ENCODE measurements at regions of chr22 and their contacts with region 1.

Region 1: DNA sequence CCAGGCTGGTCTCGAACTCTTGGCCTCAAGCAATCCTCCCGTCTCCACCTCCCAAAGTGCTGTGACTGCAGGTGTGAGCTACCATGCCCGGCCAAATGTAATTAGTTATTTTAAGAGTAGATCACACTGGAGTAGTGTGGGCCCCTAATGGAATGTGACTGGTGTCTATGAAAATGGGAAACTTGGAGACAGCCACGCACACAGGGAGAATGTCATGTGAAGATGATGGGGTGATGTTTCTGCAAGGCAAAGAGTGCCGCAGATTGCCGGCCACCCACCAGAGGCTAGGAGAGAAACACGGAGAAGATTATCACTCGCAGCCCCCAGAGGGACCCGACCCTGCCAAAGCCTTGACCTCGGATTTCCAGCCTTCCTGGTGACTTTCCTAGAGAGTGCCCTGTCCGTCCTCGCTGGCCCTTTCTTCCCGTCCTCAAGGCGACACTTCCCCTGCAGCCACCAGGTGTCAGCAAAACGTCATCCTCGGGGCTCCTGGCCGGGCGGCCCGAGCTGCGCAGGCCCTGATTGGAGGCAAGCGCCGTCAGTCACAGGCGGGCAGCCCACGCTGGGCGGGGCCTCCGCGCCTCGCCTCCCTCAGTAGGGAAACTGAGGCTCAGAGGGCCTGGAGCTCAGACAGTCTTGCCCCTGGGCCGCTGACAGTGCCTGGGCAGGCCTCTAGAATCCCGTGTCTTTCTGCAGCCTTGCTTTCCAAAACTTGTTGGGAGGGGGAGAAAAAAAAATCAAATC is 16.3 kb downstream of the CRYBB2 start:
- DNase-seq: peak; percentile 80
- ATAC-seq: peak; percentile 100
- H3K4me3 ChIP-seq: peak overlapping the region; percentile 53
- H3K27ac ChIP-seq: no peak overlapping the region
- H3K4me1 ChIP-seq: no peaks in the 10 kb centered on the region
- H3K27me3 ChIP-seq: no peaks in the 10 kb centered on the region
- CTCF ChIP-seq: peak; percentile 79

Region 2: DNA sequence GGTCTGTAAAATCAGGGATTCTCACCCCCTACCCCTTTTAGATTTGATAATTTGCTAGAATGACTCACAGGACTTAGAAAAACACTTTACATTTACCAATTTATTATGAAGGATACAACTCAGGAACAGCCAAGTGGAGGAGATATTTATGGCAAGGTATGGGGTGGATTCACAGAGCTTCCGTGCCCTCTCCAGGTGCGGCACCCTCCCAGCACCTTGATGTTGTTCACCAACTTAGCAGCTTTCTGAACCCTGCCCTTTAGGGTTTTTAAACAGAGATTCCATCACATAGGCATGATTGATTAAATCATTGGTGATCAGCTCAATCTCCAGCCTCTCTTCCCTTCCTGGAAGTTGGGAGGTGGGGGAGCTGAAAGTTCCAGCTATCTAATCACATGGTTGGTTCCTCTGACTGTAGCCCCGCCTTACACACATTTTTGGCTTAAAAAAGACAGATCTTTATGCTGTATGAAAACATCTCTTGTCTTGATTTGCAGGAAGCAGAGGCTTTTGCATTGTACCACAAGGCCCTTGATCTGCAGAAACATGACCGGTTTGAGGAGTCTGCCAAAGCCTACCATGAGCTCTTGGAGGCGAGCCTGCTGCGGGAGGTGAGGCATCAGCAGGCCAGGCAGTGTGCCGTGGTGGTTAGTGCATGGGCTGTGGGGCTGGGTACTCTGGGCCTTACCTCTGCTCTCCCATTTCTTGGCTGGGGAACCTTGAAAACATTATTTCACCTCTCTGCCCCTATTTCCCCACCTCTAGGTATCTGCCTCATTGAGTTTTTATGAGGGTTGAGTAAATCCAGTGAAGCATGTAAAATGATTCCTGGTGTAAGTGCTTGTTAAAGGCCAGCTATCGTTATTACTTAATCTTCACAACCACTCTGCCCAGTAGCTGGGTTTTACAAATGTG is 1197.6 kb before region 1 on chr22:
- CTCF ChIA-PET with region 1: no interaction called
- POLR2A ChIA-PET with region 1: no interaction called
- intact Hi-C with region 1: no loop called
- DNase-seq: no peak
- ATAC-seq: no peak
- H3K4me3 ChIP-seq: no peak overlapping the region
- H3K27ac ChIP-seq: no peak overlapping the region
- H3K4me1 ChIP-seq: peaks cover 10% of the 10 kb centered on the region
- H3K27me3 ChIP-seq: no peaks in the 10 kb centered on the region
- CTCF ChIP-seq: no peak

Region 3: DNA sequence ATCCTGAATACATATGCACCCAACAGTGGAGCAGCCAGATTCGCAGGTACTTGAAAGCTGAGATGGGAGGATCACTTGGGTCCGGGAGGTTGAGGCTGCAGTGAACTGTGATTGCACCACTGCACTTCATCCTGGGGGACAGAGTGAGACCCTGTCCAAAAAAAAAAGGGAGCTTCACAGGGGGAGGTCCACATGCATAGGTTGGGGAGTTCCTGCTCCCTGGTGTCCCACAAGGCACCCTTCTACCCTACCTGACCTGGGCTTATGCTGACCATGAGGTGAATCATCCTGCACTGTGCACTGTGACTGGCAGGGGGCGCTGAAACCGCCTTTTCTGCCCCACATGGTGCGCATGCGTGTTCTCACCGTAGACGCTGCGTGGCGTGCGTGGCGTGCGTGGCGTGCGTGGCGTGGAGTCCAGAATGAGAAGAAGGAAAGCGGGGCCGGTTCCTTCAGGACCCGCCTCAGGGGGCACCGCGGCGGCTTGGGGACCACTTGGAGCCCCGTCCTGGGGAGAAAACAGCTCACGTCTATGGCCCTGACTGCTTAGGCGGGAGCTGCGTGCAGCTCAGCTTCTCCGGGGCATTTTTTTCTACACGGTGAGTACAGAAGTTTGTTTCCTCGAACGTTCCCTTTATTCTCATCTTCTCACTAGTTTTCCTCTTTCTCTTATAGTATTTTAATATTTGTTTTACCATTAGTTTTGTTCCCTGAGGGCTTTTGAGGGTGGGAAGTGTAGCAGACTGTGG is 212.1 kb after region 1 on chr22:
- CTCF ChIA-PET with region 1: no interaction called
- POLR2A ChIA-PET with region 1: no interaction called
- intact Hi-C with region 1: loop called (anchors 5 kb)
- DNase-seq: peak; percentile 81
- ATAC-seq: peak; percentile 88
- H3K4me3 ChIP-seq: peak overlapping the region; percentile 96
- H3K27ac ChIP-seq: no peak overlapping the region
- H3K4me1 ChIP-seq: peaks cover 5% of the 10 kb centered on the region; the same call in 1 of the 2 replicates
- H3K27me3 ChIP-seq: no peaks in the 10 kb centered on the region
- CTCF ChIP-seq: peak; percentile 73

Region 4: GRCh38 chr22:25702040-25702439 is 466.3 kb after region 1 on chr22:
- CTCF ChIA-PET with region 1: no interaction called
- POLR2A ChIA-PET with region 1: no interaction called
- intact Hi-C with region 1: loop called (anchors 2 kb)
- DNase-seq: peak; percentile 11
- ATAC-seq: no peak
- H3K4me3 ChIP-seq: no peak overlapping the region
- H3K27ac ChIP-seq: no peak overlapping the region
- H3K4me1 ChIP-seq: no peaks in the 10 kb centered on the region
- H3K27me3 ChIP-seq: peaks cover 51% of the 10 kb centered on the region
- CTCF ChIP-seq: peak; percentile 46; the same call in 1 of the 2 replicates

Region 5: DNA sequence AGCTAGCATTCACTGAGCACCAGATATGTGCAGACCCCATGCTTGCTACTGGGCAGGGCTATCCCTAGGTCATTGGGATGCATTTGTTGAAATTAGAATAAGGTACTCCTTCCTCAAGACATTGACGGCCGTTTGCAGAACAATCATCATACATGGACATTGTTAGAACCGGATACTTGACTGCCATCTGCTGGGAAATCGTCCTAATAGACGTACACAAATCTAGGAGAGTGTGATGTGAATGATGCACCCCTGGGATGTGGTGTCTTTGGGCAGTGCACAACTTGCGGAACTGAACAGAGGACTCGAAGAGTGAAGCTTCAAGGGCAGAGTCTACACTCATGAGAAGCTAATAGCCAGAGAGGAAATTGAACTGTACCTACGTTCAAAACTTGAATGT is 542.2 kb after region 1 on chr22:
- CTCF ChIA-PET with region 1: no interaction called
- POLR2A ChIA-PET with region 1: no interaction called
- intact Hi-C with region 1: loop called (anchors 10 kb)
- DNase-seq: peak; percentile 54
- ATAC-seq: peak; percentile 64
- H3K4me3 ChIP-seq: no peak overlapping the region
- H3K27ac ChIP-seq: no peak overlapping the region
- H3K4me1 ChIP-seq: no peaks in the 10 kb centered on the region
- H3K27me3 ChIP-seq: no peaks in the 10 kb centered on the region
- CTCF ChIP-seq: peak; percentile 41; the same call in 1 of the 2 replicates